ENCODE measurements at regions of chr1 and their contacts with region 1.

Region 1: GRCh38 chr1:46747683-46748288 is 28.9 kb upstream of the EFCAB14 start:
- DNase-seq: peak; percentile 86
- H3K4me3 Mint-ChIP-seq: no peak overlapping the region
- H3K27ac Mint-ChIP-seq: no peak overlapping the region
- H3K4me1 Mint-ChIP-seq: peaks cover 48% of the 10 kb centered on the region
- H3K27me3 Mint-ChIP-seq: peaks cover 11% of the 10 kb centered on the region
- CTCF ChIP-seq: peak; percentile 57

Region 2: DNA sequence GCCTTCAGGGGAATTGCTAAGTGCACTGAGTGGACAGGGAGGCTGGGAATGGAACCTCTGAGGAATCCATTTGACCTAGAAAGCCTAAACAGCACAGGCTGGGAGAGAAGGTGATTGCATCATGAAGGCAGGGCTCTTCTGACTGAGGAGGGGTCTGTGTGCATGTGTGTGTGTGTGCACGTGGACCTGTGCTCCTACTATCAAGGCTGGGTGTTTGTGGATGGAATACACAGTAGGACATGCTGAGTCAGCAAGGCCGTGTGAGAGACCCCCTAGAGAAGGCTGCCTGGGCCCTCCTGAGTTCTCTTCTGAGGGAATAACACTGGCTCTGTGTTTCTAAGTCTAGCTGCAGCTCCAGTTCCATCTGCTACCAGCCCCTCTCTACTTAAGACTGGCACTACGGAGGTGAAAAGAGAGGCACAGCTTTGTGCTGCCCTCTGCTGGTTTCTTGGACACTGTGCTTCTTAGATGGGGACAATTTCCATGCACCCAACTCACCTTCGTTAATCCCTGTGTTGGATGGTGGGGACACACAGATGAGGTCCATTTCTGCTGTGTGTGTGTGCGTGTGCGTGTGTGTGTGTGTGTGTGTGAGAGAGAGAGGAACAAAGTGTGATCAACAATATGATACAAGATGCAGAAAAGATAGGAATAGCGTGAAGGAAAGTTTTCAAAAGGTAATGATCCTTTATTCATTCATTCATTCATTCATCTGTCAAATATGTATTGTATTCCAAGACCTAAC is 22.6 kb before region 1 on chr1:
- CTCF ChIA-PET with region 1: interaction called, 10 read pairs
- POLR2A ChIA-PET with region 1: interaction called, 9 read pairs
- intact Hi-C with region 1: no loop called
- DNase-seq: peak; percentile 86
- H3K4me3 Mint-ChIP-seq: no peak overlapping the region
- H3K27ac Mint-ChIP-seq: no peak overlapping the region
- H3K4me1 Mint-ChIP-seq: peaks cover 15% of the 10 kb centered on the region
- H3K27me3 Mint-ChIP-seq: peaks cover 34% of the 10 kb centered on the region
- CTCF ChIP-seq: peak; percentile 72

Region 3: DNA sequence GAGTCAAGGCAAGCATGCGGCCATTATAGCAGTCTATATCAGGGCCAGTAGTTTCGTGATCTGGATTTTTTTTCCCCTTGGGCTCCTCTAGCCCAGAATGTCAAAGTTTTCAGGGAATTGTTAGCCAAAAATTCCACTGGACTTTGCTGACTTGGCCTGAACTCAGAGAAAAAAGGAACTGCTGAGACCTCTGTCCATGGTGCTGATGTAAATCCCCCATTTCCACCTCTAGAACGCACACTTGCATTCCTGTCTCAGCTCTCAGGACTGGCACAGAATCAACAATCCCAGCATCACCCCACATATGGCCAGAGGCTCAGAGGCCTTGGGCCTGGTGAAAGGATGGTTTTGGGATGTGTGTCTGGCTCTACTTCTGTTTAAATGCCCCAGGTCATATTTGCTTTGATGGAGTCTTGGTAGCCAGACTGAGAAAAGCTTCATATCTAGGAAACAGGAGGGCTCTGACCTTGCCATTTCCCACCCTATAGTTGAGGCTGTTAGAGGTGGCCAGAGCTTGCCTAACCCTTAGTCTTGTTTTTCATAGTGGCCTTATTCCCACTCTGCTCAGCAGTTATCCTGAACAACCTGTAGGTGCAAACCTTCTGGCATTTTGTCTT is 12.0 kb before region 1 on chr1:
- CTCF ChIA-PET with region 1: interaction called, 24 read pairs
- POLR2A ChIA-PET with region 1: no interaction called
- intact Hi-C with region 1: no loop called
- DNase-seq: peak; percentile 71
- H3K4me3 Mint-ChIP-seq: no peak overlapping the region
- H3K27ac Mint-ChIP-seq: no peak overlapping the region
- H3K4me1 Mint-ChIP-seq: no peaks in the 10 kb centered on the region
- H3K27me3 Mint-ChIP-seq: peaks cover 22% of the 10 kb centered on the region
- CTCF ChIP-seq: peak; percentile 14

Region 4: DNA sequence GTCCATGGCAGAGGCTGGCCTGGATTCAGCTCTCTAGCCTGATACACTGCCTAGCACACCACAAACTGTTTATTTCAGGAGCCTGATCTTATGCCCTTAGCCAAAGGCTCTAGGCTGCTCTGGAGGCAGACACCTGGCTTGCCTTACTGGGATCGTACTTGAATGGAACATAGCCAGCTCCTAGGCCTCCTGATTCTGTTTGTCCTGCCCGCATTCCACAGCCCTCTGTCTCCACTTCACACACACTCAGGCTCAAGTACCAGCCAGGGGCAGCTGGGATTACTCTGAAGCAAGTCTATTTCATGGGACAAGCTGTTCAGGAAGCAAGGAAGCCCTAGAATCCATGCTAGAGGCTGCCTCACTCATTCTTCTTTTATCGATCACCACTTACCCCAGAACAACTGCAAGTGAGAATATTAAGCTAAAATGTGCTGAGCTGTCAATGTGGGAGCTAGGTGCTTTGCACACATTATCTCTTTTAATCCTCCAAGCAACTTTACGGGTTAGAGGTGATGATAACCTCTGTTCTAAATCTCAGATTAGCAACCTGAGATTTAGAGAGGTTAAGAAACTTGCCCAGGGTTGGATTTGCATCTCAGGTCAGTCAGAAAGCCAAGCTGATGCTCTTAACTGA is 20.0 kb after region 1 on chr1:
- CTCF ChIA-PET with region 1: interaction called, 15 read pairs
- POLR2A ChIA-PET with region 1: interaction called, 5 read pairs
- intact Hi-C with region 1: no loop called
- DNase-seq: no peak
- H3K4me3 Mint-ChIP-seq: no peak overlapping the region
- H3K27ac Mint-ChIP-seq: peak overlapping the region; percentile 36
- H3K4me1 Mint-ChIP-seq: no peaks in the 10 kb centered on the region
- H3K27me3 Mint-ChIP-seq: no peaks in the 10 kb centered on the region
- CTCF ChIP-seq: no peak

Region 5: DNA sequence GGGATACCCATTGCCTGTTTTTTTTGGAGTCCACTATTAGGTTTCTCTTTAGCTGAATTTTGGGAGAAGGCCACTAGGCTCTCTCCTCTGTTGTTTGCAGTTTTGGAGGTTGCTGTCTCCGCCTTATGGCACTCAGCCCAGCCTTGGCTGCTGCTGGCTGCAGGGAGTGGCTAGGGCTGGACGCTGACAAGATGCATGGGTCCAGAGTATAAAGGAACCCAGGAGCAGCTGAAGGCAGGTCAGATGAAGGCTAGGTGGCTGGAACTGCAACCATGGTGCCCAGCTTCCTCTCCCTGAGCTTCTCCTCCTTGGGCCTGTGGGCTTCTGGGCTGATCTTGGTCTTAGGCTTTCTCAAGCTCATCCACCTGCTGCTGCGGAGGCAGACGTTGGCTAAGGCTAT is 51.0 kb after region 1 on chr1 and contains the start of gene CYP4B1:
- CTCF ChIA-PET with region 1: interaction called, 9 read pairs
- POLR2A ChIA-PET with region 1: interaction called, 13 read pairs
- intact Hi-C with region 1: no loop called
- DNase-seq: peak; percentile 58
- H3K4me3 Mint-ChIP-seq: peak within 1 kb of the TSS; percentile 68
- H3K27ac Mint-ChIP-seq: no peak within 1 kb of the TSS
- H3K4me1 Mint-ChIP-seq: peaks cover 6% of the 10 kb centered on the region
- H3K27me3 Mint-ChIP-seq: no peaks in the 10 kb centered on the region
- CTCF ChIP-seq: no peak
- total RNA-seq, gene CYP4B1: 5.9 and 10.1 TPM in 2 replicates

Region 6: GRCh38 chr1:46806271-46807020 is 58.7 kb after region 1 on chr1:
- CTCF ChIA-PET with region 1: interaction called, 9 read pairs
- POLR2A ChIA-PET with region 1: interaction called, 10 read pairs
- intact Hi-C with region 1: no loop called
- DNase-seq: peak; percentile 90
- H3K4me3 Mint-ChIP-seq: peak overlapping the region; percentile 46
- H3K27ac Mint-ChIP-seq: no peak overlapping the region
- H3K4me1 Mint-ChIP-seq: peaks cover 19% of the 10 kb centered on the region
- H3K27me3 Mint-ChIP-seq: no peaks in the 10 kb centered on the region
- CTCF ChIP-seq: no peak

Region 7: GRCh38 chr1:46991083-46991923 is 243.5 kb after region 1 on chr1:
- CTCF ChIA-PET with region 1: interaction called, 60 read pairs
- POLR2A ChIA-PET with region 1: no interaction called
- intact Hi-C with region 1: loop called (anchors 1 kb)
- DNase-seq: peak; percentile 52
- H3K4me3 Mint-ChIP-seq: no peak overlapping the region
- H3K27ac Mint-ChIP-seq: no peak overlapping the region
- H3K4me1 Mint-ChIP-seq: peaks cover under 1% of the 10 kb centered on the region
- H3K27me3 Mint-ChIP-seq: peaks cover 3% of the 10 kb centered on the region
- CTCF ChIP-seq: peak; percentile 38